Activated T-helper 1 cell treated with anti-CD3 and anti-CD28 coated beads, Interleukin-12 subunit alpha, Interleukin-12 subunit beta, Interleukin-2, Interleukin-4 antibody, amounts not matched to agents 30 ng/mL and 10 ng/mL and 1 ng/mL, durations not matched to agents 14 hours and 24 hours and 36 hours (primary cell): ENCODE measurements at regions of chr3 and their contacts with region 1.

Region 1: DNA sequence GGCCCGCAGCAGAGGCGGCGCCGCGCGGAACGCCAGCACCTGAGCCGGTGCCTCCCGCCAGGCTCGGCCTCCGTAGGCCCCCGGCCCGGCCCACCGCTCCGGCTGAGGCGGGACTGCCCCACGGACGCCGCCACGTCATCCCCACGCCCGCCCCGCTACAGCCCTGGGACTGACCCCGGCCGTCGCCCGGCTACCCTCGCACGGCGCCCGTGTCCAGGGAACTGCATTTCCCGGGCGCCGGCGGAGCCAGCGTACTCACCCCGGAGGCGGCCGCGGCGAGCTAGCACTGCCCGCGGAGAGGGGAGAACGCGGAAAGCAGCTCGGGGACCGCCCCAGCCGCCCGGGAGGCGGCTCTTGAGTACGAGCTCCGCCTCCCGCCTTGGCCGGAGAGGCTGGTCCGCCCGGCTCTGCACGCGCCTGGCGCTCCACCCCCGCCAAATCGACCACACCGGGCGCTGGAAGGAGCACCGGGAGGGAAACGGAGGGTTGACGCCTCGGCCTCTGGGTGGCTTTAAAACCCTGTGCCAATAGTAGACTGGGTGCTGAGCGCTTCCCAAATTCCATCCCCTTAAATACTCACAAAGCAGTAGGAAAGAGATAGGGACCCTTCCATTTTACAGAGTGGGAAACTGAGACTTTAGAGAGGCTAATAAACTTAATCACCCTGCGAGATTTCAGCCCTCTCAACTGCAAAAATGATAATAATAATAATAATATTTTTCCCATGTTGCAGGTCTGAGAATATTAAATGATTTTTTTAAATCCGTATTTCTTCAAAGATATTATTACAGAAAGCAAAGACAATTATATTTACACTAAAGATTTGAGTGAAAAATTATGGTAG is at the start of gene B4GALT4:
- DNase-seq: peak; percentile 75
- H3K4me3 Mint-ChIP-seq: peak within 1 kb of the TSS; percentile 87
- H3K27ac Mint-ChIP-seq: peak within 1 kb of the TSS; percentile 90
- H3K4me1 Mint-ChIP-seq: peaks cover 40% of the 10 kb centered on the region
- H3K27me3 Mint-ChIP-seq: no peaks in the 10 kb centered on the region
- total RNA-seq, gene B4GALT4: 14.1 and 18.6 TPM in 2 replicates

Region 2: GRCh38 chr3:118884748-118885206 is 356.0 kb before region 1 on chr3:
- intact Hi-C with region 1: loop called (anchors 1 kb)
- DNase-seq: peak; percentile 57
- H3K4me3 Mint-ChIP-seq: no peak overlapping the region
- H3K27ac Mint-ChIP-seq: no peak overlapping the region
- H3K4me1 Mint-ChIP-seq: peaks cover 8% of the 10 kb centered on the region
- H3K27me3 Mint-ChIP-seq: peaks cover 6% of the 10 kb centered on the region

Region 3: DNA sequence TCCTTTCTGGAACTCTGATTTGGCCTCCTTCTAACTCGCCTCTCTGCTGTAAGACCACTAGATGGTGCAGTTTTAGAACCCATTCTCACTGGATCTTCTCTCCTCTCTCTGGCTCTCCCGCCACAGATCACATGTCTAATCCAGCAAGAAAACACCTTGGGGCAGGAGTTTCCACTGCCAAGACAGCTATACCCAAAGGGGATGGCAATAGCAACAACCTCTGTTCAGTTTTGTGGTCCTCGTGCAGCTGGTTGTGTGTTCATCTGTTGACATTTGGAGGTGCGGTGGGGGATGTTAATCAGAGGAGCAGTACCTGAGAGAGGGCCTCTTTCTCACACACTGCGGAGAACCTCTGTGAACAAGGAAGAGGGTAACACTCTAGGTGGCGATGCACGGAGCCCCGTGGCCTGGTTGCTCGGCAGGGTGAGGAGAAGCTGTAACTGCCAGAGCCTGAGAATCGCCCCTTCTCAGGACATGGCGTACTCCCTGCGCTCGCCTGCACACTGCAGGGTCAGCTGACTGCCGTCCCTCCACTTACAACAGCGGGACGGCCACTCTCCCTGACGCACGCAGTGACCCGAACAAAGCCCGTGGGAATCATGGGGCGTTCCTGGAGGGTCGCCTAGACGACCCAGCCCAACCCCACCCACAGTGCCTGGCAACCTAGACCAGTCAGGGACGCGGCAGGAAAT is 95.2 kb before region 1 on chr3 and contains the start of gene TEX55:
- intact Hi-C with region 1: loop called (anchors 1 kb)
- DNase-seq: no peak
- H3K4me3 Mint-ChIP-seq: no peak within 1 kb of the TSS
- H3K27ac Mint-ChIP-seq: no peak within 1 kb of the TSS
- H3K4me1 Mint-ChIP-seq: no peaks in the 10 kb centered on the region
- H3K27me3 Mint-ChIP-seq: no peaks in the 10 kb centered on the region
- total RNA-seq, gene TEX55: not detected in 2 replicates

Region 4: DNA sequence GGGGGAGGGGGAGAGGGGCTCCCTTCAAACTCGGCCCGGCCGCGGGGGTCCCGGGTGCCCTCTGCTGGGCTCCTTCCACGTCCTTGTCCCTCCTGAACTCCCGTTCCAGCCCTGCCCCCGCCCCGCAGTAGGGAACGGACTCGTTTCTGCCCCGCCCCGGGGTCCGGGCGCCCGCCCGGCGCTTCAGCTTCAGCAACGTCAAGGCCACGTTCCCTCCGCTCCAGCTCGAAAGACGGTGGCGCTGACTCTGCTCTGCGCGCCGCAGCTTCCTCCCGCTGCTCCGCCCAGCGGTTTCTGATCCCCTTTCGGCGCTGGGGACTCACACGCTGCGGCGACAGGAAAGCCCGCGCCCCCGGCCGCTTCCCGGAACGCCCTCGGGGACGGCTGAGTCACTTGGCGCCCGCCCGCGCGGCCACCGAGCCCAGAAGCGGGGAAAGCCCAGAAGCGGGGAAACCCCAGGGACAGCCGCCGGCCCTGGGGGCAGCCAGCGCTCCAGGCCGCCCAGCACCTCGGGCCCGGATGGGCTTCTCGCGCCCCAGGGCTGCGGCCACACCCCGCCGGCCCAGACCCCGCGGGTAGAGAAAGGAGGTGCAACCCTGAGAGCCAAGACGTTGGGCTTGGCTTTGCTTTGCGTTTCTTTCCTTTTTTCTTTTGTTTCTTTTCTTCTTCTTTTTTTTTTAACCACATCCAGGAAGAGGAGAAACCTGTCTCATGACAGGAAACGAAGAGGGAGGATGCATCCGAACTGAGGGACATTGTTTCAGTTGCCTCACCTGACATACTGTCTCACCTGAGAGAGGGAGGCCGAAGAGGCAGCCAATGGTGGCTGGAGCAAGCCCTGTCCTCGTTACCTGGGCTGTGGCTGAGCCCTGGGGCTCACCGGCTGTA is 82.3 kb after region 1 on chr3:
- intact Hi-C with region 1: loop called (anchors 2 kb)
- DNase-seq: peak; percentile 92
- H3K4me3 Mint-ChIP-seq: peak overlapping the region; percentile 80
- H3K27ac Mint-ChIP-seq: peak overlapping the region; percentile 92
- H3K4me1 Mint-ChIP-seq: peaks cover 52% of the 10 kb centered on the region
- H3K27me3 Mint-ChIP-seq: peaks cover 27% of the 10 kb centered on the region

Region 5: GRCh38 chr3:119469381-119470189 is 228.8 kb after region 1 on chr3:
- intact Hi-C with region 1: loop called (anchors 1 kb)
- DNase-seq: no peak
- H3K4me3 Mint-ChIP-seq: peak overlapping the region; percentile 95
- H3K27ac Mint-ChIP-seq: peak overlapping the region; percentile 93
- H3K4me1 Mint-ChIP-seq: peaks cover 39% of the 10 kb centered on the region
- H3K27me3 Mint-ChIP-seq: no peaks in the 10 kb centered on the region

Region 6: GRCh38 chr3:119702530-119703157 is 461.8 kb after region 1 on chr3 and contains the start of gene CFAP91:
- intact Hi-C with region 1: loop called (anchors 2 kb)
- DNase-seq: peak; percentile 78
- H3K4me3 Mint-ChIP-seq: peak within 1 kb of the TSS; percentile 67
- H3K27ac Mint-ChIP-seq: no peak within 1 kb of the TSS
- H3K4me1 Mint-ChIP-seq: peaks cover 37% of the 10 kb centered on the region
- H3K27me3 Mint-ChIP-seq: peaks cover 29% of the 10 kb centered on the region
- total RNA-seq, gene CFAP91: 0.24 TPM in 1 of 2 replicates, not detected in the other

Region 7: DNA sequence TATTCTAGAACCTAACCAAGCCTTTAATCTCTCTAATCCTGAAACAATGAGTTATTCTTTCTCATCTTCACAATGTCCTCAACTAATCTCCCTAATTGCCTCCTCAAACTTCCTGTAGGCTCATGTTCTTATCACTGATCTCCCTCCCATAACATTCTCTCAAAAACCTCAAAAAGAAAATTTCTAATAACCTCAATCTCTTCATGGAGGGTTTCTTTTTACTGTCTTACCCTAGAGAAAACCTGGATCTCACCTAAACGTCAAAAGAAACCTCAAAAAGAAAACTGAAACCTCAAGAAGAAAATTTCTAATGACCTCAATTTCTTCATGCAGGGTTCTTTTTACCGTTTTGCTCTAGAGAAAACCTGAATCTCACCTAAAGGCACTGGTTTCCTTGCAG is 703.3 kb after region 1 on chr3:
- intact Hi-C with region 1: no loop called
- DNase-seq: no peak
- H3K4me3 Mint-ChIP-seq: no peak overlapping the region
- H3K27ac Mint-ChIP-seq: no peak overlapping the region
- H3K4me1 Mint-ChIP-seq: peaks cover 16% of the 10 kb centered on the region
- H3K27me3 Mint-ChIP-seq: no peaks in the 10 kb centered on the region